H1 (cell line): ENCODE measurements at regions of chr10 and their contacts with region 1.

Region 1: DNA sequence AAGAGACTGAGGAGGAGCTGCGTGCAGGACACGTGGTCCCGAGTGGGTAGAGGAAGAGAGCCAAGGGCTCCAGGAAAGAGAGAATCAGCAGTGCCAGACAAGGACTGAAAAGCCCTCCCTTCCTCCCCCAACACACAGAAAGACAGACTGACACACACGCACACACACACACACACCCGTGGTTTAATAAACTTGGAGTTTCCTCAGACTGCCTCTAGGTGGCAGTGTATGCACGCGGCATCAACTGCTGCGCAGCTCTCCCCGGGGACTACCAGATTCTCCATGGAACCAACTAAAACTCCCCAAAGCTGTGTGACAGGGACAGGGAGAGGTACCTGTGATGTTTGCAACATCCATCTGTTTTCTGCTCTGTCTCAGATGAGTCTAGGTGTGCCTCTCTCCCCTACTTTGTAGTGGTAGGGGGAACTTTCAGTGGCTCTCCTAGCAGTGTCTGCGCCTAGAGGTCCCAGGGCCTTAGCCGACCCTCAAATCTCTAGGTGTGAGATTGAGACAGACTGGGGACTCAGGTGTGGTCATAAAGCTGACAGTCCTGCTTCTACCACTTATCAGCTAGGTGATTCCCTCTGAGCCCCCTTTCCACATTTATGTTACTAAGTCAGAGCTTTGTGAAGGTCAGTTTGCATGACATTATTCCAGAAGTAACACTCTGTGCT is 9.3 kb upstream of the TSPAN14 start:
- DNase-seq: peak in 1 of 2 experiments; percentile 58
- H3K4me3 ChIP-seq: no peak overlapping the region
- H3K27ac ChIP-seq: no peak overlapping the region
- H3K4me1 ChIP-seq: peaks cover 0 to 3% (median 0%) of the 10 kb centered on the region in 4 experiments; a peak in 1 of 7 replicates
- H3K27me3 ChIP-seq: no peaks in the 10 kb centered on the region
- CTCF ChIP-seq: peak; percentile 78 to 95 (median 87)
- EP300 ChIP-seq: no peak
- POLR2A ChIP-seq: no peak
- RAD21 ChIP-seq: peak; percentile 98

Region 2: DNA sequence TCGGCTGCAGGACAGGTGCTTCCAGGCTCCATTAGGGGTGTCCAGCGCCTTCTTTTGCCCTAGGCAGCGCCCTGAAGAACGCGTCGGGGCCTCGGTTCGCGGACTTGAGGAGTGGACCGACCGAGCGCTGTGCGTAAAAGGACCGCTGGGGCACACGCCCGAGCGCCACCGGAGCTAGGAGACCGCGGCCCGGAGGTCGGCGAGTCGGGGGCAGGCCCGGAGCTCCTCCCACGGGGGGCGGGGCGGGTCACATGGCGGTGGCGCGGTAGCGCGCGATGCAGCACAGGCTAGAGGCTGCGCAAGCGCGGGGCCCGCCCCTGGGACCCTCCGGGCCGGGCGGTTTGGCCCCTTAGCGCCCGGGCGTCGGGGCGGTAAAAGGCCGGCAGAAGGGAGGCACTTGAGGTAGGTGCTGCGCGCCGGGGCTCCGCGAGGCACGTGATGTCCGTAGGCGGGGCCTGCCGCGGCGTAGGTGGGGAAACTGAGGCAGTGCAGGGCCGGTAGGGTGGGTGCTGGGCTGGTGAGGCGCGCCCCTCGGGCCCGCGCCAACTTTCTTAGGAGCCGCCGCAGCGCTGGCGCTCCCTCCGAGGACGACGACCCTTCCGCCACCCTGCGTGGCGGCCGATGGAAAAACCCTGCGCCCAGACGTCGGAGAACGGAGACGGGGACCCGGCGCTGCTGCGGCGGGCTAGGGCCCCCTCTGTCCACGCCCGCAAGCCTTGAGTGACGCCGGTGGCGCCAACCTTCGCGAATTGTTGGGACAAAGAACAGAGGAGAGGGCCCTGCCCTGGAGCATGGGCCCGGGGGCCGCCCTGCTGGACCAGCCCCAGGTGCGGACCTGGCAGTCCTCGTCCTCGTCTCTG is 36.3 kb before region 1 on chr10 and contains the start of gene PRXL2A:
- CTCF ChIA-PET with region 1: interaction called, 21 read pairs
- POLR2A ChIA-PET with region 1: no interaction called
- DNase-seq: peak; percentile 50 to 97
- H3K4me3 ChIP-seq: peak within 1 kb of the TSS; percentile 50 to 65 (median 60)
- H3K27ac ChIP-seq: no peak within 1 kb of the TSS
- H3K4me1 ChIP-seq: peaks cover 0 to 5% (median 2%) of the 10 kb centered on the region in 4 experiments; a peak in 5 of 7 replicates
- H3K27me3 ChIP-seq: peaks cover 0 to 10% (median 6%) of the 10 kb centered on the region in 4 experiments; a peak in 3 of 7 replicates
- CTCF ChIP-seq: no peak
- EP300 ChIP-seq: no peak; a peak in 1 of 3 replicates
- POLR2A ChIP-seq: 0 out of 3 replicates have a peak, but pooled peaks of 1 of the 2 experiments have one; percentile 17
- RAD21 ChIP-seq: no peak
- total RNA-seq, gene PRXL2A: 58.3 and 60.1 TPM in 2 replicates

Region 3: DNA sequence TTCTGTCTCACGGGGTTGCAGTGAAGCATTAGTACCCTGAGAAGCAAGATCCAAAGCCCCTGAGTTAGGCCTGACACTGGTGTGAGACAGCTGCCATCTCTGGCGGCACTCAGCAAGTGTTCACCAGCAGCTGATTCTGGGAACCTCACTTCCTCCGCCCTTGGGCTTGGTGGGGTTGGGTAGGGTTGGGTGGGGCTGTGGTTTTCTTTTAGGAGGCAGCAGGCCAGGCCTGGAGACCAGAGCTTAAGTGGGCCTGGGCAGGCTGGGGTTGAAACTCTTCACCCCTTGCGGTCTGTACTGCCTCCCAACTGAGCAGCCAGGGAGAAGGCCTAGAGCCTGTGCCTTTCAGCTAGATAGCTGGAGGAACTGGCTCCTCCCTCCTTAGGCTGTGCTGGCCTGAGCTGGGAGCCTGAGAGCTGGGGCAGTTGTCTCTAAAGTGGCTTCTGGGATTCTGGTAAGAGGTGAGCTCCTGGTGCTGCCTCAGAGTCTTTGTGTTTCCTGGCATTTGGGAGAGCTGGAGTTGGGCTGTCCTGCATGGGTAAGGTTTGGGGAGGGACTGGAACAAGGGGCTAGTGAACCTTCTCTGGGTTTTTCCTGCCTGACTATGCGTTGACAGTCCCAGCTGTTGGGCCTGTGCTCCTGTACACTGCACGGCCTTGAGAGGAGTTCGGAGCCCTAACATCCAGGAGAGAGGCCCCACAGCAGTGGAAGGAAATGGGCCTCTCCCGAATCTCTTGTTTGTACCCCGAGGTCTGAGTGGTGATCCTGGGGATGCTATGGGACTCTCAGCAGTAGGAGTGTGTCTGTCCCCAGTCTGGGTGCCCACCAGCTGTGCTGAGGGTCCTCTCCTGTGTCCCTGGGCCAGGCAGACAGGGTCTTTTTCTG is 14.5 kb after region 1 on chr10:
- CTCF ChIA-PET with region 1: interaction called, 456 read pairs
- POLR2A ChIA-PET with region 1: interaction called, 5 read pairs
- DNase-seq: no peak
- H3K4me3 ChIP-seq: no peak overlapping the region
- H3K27ac ChIP-seq: no peak overlapping the region
- H3K4me1 ChIP-seq: peaks cover 43 to 64% (median 55%) of the 10 kb centered on the region in 4 experiments
- H3K27me3 ChIP-seq: no peaks in the 10 kb centered on the region; a peak in 1 of 7 replicates
- CTCF ChIP-seq: peak in 1 of 3 experiments; percentile 8; a peak in 1 of 4 replicates
- EP300 ChIP-seq: no peak
- POLR2A ChIP-seq: no peak
- RAD21 ChIP-seq: no peak

Region 4: DNA sequence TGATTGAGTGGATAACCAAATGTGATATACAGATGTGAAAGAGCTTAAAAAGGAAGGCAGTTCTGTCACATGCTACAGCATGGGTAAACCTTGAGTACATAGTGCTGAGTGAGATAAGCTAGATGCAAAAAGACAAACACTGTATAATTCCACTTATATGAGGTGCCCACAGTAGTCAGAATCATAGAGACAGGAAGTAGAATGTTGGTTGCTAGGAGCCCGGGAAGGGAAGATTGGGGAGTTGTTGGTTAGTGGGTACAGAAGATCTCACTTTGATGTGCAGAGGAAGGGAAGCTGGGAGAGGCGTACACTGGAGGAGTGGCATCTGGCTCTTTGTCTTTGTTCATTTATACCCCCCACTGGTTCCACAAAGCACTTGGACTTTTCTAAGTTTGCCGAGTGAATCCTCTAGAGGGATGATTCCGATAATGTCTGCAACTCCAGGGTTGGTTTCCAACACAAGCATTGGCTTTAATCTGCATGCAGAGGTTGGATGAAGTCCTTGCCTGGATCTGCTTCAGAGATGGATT is 48.8 kb after region 1 on chr10:
- CTCF ChIA-PET with region 1: interaction called, 1,263 read pairs
- POLR2A ChIA-PET with region 1: interaction called, 4 read pairs
- DNase-seq: no peak
- H3K4me3 ChIP-seq: no peak overlapping the region
- H3K27ac ChIP-seq: no peak overlapping the region
- H3K4me1 ChIP-seq: peaks cover 0 to 9% (median 5%) of the 10 kb centered on the region in 4 experiments; a peak in 5 of 7 replicates
- H3K27me3 ChIP-seq: no peaks in the 10 kb centered on the region
- CTCF ChIP-seq: no peak
- EP300 ChIP-seq: no peak
- POLR2A ChIP-seq: no peak
- RAD21 ChIP-seq: no peak

Region 5: DNA sequence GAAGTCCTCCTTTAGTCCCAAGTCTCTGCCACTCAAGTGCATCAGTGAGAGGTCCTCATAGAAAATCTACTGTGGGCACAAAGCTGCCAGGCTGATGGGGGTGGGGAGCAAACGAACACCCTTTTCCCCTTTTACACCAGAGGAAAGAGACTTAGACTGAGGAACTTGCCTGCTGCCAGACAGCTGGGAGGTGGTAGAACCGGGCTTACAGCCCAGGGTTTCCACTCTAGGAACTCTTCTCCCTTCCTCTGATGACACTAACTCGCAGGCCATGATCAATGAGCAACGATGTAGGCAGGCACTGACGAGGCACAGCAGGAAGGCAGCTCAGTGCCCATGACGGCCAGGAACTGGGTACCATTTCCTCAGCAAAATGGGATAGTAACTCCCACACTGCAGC is 82.0 kb after region 1 on chr10:
- CTCF ChIA-PET with region 1: interaction called, 10 read pairs
- POLR2A ChIA-PET with region 1: no interaction called
- DNase-seq: no peak
- H3K4me3 ChIP-seq: no peak overlapping the region
- H3K27ac ChIP-seq: no peak overlapping the region
- H3K4me1 ChIP-seq: peaks cover 0 to 4% (median under 1%) of the 10 kb centered on the region in 4 experiments; a peak in 5 of 7 replicates
- H3K27me3 ChIP-seq: no peaks in the 10 kb centered on the region
- CTCF ChIP-seq: no peak
- EP300 ChIP-seq: no peak
- POLR2A ChIP-seq: no peak
- RAD21 ChIP-seq: no peak

Region 6: DNA sequence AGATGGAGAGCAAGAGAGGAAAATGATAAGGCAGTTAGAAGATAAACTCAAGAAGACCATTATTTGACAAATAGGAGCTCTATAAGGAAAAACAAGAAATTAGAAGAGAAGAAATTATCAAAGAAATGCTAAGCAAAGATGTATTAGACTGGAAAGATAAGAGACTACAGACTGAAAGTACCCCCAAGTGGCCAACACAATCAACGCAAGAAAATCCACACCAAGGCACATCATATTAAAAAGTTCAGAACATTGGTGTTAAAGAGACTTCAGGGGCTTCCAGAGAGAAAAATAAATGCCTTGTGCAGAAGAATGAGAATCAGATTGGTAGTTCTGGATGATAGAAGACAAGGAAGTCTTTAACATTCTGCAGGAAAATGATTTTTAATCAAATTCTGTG is 138.9 kb after region 1 on chr10:
- CTCF ChIA-PET with region 1: interaction called, 16 read pairs
- POLR2A ChIA-PET with region 1: no interaction called
- DNase-seq: no peak
- H3K4me3 ChIP-seq: no peak overlapping the region
- H3K27ac ChIP-seq: no peak overlapping the region
- H3K4me1 ChIP-seq: no peaks in the 10 kb centered on the region
- H3K27me3 ChIP-seq: no peaks in the 10 kb centered on the region; a peak in 1 of 7 replicates
- CTCF ChIP-seq: no peak
- EP300 ChIP-seq: no peak
- POLR2A ChIP-seq: no peak
- RAD21 ChIP-seq: no peak

Region 7: DNA sequence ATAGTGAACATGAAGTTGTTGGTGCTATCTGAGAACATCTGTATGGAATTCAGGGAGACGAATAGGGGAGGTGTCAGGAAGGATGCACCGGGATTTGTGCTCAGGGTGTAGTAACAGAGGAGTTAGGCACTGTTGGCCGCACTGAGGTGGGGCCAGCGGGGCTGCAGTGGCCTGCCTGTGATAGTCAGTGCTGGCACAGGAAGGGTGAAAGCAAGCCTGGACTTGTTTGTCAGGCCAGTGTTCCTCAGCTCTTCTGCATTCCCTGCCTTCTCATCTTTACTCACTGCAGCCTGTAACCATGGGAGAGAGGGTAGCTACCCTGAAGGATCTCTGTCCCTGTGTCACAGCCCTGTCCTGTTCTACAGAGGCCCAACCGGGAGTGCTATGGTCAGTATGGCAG is 174.3 kb after region 1 on chr10:
- CTCF ChIA-PET with region 1: no interaction called
- POLR2A ChIA-PET with region 1: no interaction called
- DNase-seq: no peak
- H3K4me3 ChIP-seq: no peak overlapping the region
- H3K27ac ChIP-seq: no peak overlapping the region
- H3K4me1 ChIP-seq: no peaks in the 10 kb centered on the region
- H3K27me3 ChIP-seq: no peaks in the 10 kb centered on the region
- CTCF ChIP-seq: no peak
- EP300 ChIP-seq: no peak
- POLR2A ChIP-seq: no peak
- RAD21 ChIP-seq: no peak